Testis (tissue), 5 donors: ENCODE measurements at regions of chr20 and their contacts with region 1.

Region 1: GRCh38 chr20:31661625-31662371 is 24.1 kb downstream of the COX4I2 start:
- DNase-seq: peak; percentile 88
- H3K4me3 ChIP-seq: peak overlapping the region in 1 of 2 donors; percentile 48
- H3K27ac ChIP-seq: peak overlapping the region; percentile 51 to 75
- H3K4me1 ChIP-seq: peaks cover 38% of the 10 kb centered on the region
- H3K27me3 ChIP-seq: no peaks in the 10 kb centered on the region
- CTCF ChIP-seq: peak; percentile 56 to 93 (median 83)
- POLR2A ChIP-seq: no peak

Region 2: GRCh38 chr20:31559704-31560093 is 102.1 kb before region 1 on chr20:
- intact Hi-C with region 1: no loop called
- DNase-seq: no peak
- H3K4me3 ChIP-seq: no peak overlapping the region
- H3K27ac ChIP-seq: no peak overlapping the region
- H3K4me1 ChIP-seq: no peaks in the 10 kb centered on the region
- H3K27me3 ChIP-seq: no peaks in the 10 kb centered on the region
- CTCF ChIP-seq: no peak
- POLR2A ChIP-seq: no peak

Region 3: GRCh38 chr20:31723319-31724078 is 61.7 kb after region 1 on chr20:
- intact Hi-C with region 1: loop called (anchors 2 kb)
- DNase-seq: peak; percentile 98
- H3K4me3 ChIP-seq: peak overlapping the region; percentile 79 to 83
- H3K27ac ChIP-seq: peak overlapping the region; percentile 97 to 99
- H3K4me1 ChIP-seq: peaks cover 19% of the 10 kb centered on the region
- H3K27me3 ChIP-seq: no peaks in the 10 kb centered on the region
- CTCF ChIP-seq: peak; percentile 99 to 100 (median 99)
- POLR2A ChIP-seq: peak; percentile 18